ENCODE measurements at regions of chr11 and their contacts with region 1.

Region 1: GRCh38 chr11:118476676-118477075 is 40.4 kb downstream of the KMT2A start:
- DNase-seq: no peak
- ATAC-seq: no peak
- H3K4me3 ChIP-seq: no peak overlapping the region
- H3K27ac ChIP-seq: no peak overlapping the region
- H3K4me1 ChIP-seq: no peaks in the 10 kb centered on the region
- H3K27me3 ChIP-seq: no peaks in the 10 kb centered on the region
- CTCF ChIP-seq: no peak
- POLR2A ChIP-seq: no peak

Region 2: GRCh38 chr11:118401151-118401878 is 75.4 kb before region 1 on chr11 and contains the start of gene ATP5MG:
- intact Hi-C with region 1: loop called in 1 of 2 experiments (anchors 10 kb)
- DNase-seq: peak; percentile 91 to 92 (median 92)
- ATAC-seq: peak; percentile 78 to 87 (median 82)
- H3K4me3 ChIP-seq: peak within 1 kb of the TSS; percentile 77 to 89 (median 79)
- H3K27ac ChIP-seq: peak within 1 kb of the TSS; percentile 82 to 92 (median 84)
- H3K4me1 ChIP-seq: peaks cover 0 to 24% (median 8%) of the 10 kb centered on the region in 4 donors
- H3K27me3 ChIP-seq: no peaks in the 10 kb centered on the region
- CTCF ChIP-seq: no peak
- POLR2A ChIP-seq: peak; percentile 62
- total RNA-seq, gene ATP5MG: 32.6 to 127 (median 89.5) TPM